Left colon (tissue), 2 donors: ENCODE measurements at regions of chrX and their contacts with region 1.

Region 1: GRCh38 chrX:85544609-85545008 is 165.1 kb upstream of the POF1B start:
- DNase-seq: no peak
- ATAC-seq: no peak

Region 2: DNA sequence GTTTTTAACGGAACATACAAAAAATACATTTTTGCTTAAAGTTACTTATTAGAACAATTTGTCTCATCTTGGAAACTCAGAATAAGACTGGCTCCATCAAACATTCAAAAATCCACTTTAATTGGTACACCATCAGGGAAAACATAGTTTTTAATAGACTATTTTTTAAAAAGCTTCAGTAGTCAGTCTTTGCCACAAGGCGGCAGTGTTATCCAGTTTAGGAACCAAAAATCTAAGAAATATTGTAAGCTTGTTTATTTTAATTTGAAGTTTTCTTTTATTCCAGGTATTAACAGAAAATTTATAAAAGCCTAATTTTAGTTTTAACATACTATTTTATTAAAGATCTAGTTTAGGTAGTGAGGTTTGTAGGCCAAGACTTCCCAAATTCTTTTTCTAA is 433.3 kb before region 1 on chrX:
- intact Hi-C with region 1: loop called in 1 of 2 experiments (anchors 10 kb)
- DNase-seq: peak in 1 of 2 donors; percentile 30
- ATAC-seq: peak; percentile 38